ENCODE measurements at regions of chr13 and their contacts with region 1.

Region 1: DNA sequence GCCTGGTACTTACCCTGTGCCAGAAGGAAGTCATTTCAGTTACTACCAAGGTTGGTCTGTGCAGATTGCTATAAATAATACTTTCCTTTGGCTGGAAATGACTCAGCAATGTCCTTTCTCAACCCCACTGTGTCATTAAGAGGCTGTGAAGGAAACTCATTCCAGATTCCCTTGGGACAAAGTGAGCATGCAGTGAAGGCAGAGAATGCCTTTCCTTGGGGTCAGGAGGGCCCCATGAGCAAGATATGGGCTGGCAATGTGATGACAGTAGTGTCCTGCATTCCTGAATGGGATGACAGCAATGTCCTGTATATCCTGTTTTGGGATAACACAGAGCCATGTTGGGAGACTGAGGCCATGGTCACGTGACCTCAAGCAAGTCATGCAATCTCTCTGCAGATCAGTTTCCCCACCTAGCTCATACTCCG is 213.1 kb upstream of the TMTC4 start:
- DNase-seq: peak; percentile 66
- H3K4me3 ChIP-seq: no peak overlapping the region
- H3K27ac ChIP-seq: no peak overlapping the region
- H3K4me1 ChIP-seq: no peaks in the 10 kb centered on the region
- H3K27me3 ChIP-seq: no peaks in the 10 kb centered on the region
- CTCF ChIP-seq: no peak

Region 2: DNA sequence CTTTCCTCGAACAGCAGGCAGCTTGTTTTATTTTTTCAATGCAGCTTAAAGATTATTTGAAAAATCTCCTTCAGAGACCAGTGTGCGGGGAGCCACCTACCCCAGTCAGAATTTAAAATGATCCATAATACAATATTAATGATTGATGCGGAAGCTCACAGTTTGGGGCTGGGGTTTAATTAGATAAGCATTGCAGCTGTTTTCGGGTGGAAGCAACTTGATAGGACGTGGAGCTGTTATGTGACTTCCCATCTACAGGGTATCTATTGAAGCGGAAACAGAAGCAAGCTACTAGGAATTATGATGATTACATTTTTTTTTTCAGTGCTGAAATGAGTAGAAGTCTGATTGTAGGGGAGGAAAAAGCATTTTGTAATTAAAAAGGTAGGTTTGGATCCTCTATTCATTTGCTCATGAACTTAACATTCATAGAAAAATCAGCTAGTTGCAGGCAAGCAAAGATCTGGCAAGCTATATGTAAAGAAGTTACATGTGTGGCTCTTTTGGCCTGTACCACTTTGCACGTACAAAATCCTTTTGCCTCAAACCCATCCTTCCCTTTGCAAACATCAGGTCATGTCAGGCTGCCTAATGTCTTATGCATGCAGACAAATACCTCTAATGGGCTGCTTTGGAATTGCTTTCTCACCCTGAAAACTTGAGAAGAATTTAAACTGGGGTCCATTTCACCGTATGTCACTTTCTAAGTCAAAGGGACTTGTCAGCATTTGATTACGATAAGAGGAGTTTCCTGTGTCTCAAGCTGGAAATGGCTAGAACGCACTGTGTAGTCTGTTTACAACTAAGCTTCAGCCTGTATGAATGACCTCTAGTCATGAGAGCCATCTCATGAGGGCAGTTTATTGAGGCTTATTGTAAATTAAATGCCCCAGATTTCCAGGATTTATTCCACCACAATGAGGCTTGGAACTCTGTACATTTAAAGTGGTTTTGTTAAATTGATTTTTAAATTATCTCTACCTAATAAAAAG is 53.9 kb after region 1 on chr13:
- CTCF ChIA-PET with region 1: no interaction called
- POLR2A ChIA-PET with region 1: interaction called, 16 read pairs
- intact Hi-C with region 1: no loop called
- DNase-seq: peak; percentile 55
- H3K4me3 ChIP-seq: no peak overlapping the region
- H3K27ac ChIP-seq: peak overlapping the region; percentile 67
- H3K4me1 ChIP-seq: peaks cover 25% of the 10 kb centered on the region
- H3K27me3 ChIP-seq: no peaks in the 10 kb centered on the region
- CTCF ChIP-seq: no peak